Mammary epithelial cell (primary cell): ENCODE measurements at regions of chr15 and their contacts with region 1.

Region 1: GRCh38 chr15:51737280-51738017 is at the start of gene LYSMD2:
- DNase-seq: peak; percentile 51
- H3K4me3 ChIP-seq: peak within 1 kb of the TSS; percentile 64 to 79 (median 70)
- H3K27ac ChIP-seq: peak within 1 kb of the TSS; percentile 22
- H3K4me1 ChIP-seq: peaks cover 27% of the 10 kb centered on the region
- H3K27me3 ChIP-seq: no peaks in the 10 kb centered on the region
- CTCF ChIP-seq: no peak
- total RNA-seq, gene LYSMD2: 5.3 to 7.4 TPM

Region 2: DNA sequence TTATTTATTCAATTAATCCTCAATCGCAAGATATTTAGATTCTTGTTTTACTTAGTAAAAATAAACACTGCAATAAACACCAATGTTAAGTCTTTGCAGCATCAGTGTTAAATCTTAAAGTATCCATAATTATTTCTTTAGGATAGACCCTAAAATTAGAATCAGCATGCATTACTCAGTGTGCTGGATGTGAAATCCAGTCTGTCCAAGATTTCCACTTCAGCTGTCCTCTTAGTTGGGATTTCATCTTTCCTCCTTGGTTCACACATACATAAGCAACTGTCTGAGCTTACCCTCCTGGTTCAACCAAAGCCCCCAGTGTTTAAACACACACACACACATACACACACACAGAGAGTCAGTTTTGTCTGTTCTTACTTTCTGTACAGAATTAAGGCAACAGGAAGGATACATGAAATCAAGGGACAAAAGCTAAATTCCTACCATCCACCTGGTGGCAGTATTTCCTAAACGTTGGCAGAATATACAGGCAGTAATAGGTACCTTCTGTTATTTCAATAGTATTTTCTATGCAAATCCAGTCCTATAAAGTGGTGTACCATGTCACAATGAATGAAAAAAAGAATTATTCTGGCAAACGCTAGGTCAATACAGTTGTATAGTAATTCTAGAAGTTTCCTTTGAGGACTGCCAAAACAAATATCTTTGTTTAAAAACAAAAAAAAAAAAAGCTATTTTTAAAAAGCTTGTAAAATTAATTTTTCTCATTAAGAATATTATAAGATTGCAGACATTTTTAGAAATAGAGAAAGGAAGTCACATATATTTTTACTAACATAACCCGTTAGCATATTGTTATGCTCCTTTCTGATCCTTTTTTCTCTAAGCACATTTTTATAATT is 87.6 kb before region 1 on chr15:
- CTCF ChIA-PET with region 1: interaction called, 12 read pairs
- dilution Hi-C with region 1: no loop called
- in situ Hi-C with region 1: no loop called
- intact Hi-C with region 1: no loop called
- DNase-seq: peak; percentile 59
- H3K4me3 ChIP-seq: no peak overlapping the region
- H3K27ac ChIP-seq: no peak overlapping the region
- H3K4me1 ChIP-seq: peaks cover 4% of the 10 kb centered on the region
- H3K27me3 ChIP-seq: no peaks in the 10 kb centered on the region
- CTCF ChIP-seq: peak; percentile 68 to 82

Region 3: DNA sequence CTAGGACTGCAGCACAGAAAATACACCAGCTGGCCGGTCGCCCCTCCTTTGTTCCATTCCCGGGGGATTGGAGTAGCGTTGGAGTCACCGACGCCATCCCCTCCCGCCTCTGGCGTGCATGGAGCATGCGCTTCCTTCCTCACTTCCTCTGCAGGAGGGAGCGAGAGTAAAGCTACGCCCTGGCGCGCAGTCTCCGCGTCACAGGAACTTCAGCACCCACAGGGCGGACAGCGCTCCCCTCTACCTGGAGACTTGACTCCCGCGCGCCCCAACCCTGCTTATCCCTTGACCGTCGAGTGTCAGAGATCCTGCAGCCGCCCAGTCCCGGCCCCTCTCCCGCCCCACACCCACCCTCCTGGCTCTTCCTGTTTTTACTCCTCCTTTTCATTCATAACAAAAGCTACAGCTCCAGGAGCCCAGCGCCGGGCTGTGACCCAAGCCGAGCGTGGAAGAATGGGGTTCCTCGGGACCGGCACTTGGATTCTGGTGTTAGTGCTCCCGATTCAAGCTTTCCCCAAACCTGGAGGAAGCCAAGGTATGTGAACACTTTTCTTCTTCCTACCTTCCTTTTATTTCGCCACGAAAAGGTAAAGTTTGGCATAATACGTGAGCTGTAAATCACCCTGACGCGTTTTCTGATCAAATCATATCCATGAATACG is 56.0 kb before region 1 on chr15 and contains the start of gene SCG3:
- CTCF ChIA-PET with region 1: no interaction called
- dilution Hi-C with region 1: no loop called
- in situ Hi-C with region 1: no loop called
- intact Hi-C with region 1: loop called (anchors 2 kb)
- DNase-seq: peak; percentile 81
- H3K4me3 ChIP-seq: no peak within 1 kb of the TSS
- H3K27ac ChIP-seq: no peak within 1 kb of the TSS
- H3K4me1 ChIP-seq: no peaks in the 10 kb centered on the region
- H3K27me3 ChIP-seq: no peaks in the 10 kb centered on the region
- CTCF ChIP-seq: no peak
- total RNA-seq, gene SCG3: not detected